ENCODE measurements at regions of chr2 and their contacts with region 1.

Region 1: DNA sequence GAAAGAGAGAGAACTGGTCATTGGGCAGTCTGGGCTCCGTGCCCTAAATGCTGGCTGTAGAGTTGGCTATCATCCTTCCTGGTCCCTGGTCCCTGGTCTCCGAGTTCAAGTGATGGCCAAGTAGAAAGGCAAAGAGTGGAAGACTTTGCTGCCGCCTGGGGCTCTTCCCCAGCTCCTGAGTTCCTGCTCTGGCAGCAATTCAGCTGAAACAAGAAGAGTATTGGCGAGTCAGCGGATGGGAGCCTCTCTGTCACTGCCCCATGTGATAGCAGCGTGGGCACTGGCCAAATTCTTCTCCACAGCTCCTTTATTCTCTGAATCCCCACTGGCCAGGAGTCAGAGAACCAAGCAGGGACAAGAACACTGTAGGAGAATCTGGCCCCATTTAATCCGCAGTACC is 351.0 kb upstream of the POU3F3 start:
- DNase-seq: peak; percentile 29 to 94 (median 89)
- H3K4me3 ChIP-seq: peak overlapping the region in 54 of 59 donors; percentile 3 to 62 (median 40)
- H3K27ac ChIP-seq: peak overlapping the region; percentile 33 to 96 (median 89)
- H3K27me3 ChIP-seq: no peaks in the 10 kb centered on the region
- CTCF ChIP-seq: peak in 43 of 56 donors; percentile 2 to 66 (median 37)

Region 2: GRCh38 chr2:104412384-104412783 is 90.5 kb before region 1 on chr2:
- intact Hi-C with region 1: loop called in 1 of 2 experiments (anchors 5 kb)
- DNase-seq: peak in 9 of 10 donors; percentile 11 to 81 (median 54)
- H3K4me3 ChIP-seq: no peak overlapping the region
- H3K27ac ChIP-seq: peak overlapping the region in 3 of 59 donors; percentile 6 to 53 (median 37)
- H3K27me3 ChIP-seq: no peaks in the 10 kb centered on the region
- CTCF ChIP-seq: peak; percentile 42 to 83 (median 73)

Region 3: GRCh38 chr2:104447831-104448434 is 55.0 kb before region 1 on chr2:
- intact Hi-C with region 1: loop called (anchors 2 kb)
- DNase-seq: no peak
- H3K4me3 ChIP-seq: peak overlapping the region; percentile 7 to 69 (median 50)
- H3K27ac ChIP-seq: peak overlapping the region; percentile 39 to 98 (median 90)
- H3K27me3 ChIP-seq: no peaks in the 10 kb centered on the region
- CTCF ChIP-seq: peak; percentile 21 to 75 (median 59)

Region 4: GRCh38 chr2:104476563-104476988 is 26.3 kb before region 1 on chr2:
- intact Hi-C with region 1: loop called in 1 of 2 experiments (anchors 2 kb)
- DNase-seq: no peak
- H3K4me3 ChIP-seq: peak overlapping the region; percentile 8 to 67 (median 45)
- H3K27ac ChIP-seq: peak overlapping the region in 58 of 59 donors; percentile 6 to 96 (median 84)
- H3K27me3 ChIP-seq: no peaks in the 10 kb centered on the region
- CTCF ChIP-seq: no peak

Region 5: GRCh38 chr2:104616856-104617255 is 114.0 kb after region 1 on chr2:
- intact Hi-C with region 1: no loop called
- DNase-seq: peak in 1 of 10 donors; percentile 6
- H3K4me3 ChIP-seq: peak overlapping the region in 1 of 59 donors; percentile 10
- H3K27ac ChIP-seq: peak overlapping the region in 31 of 59 donors; percentile 8 to 76 (median 42)
- H3K27me3 ChIP-seq: no peaks in the 10 kb centered on the region
- CTCF ChIP-seq: no peak

Region 6: GRCh38 chr2:104849618-104850141 is 346.8 kb after region 1 on chr2:
- intact Hi-C with region 1: loop called (anchors 5 kb)
- DNase-seq: peak; percentile 63 to 89 (median 80)
- H3K4me3 ChIP-seq: peak overlapping the region; percentile 26 to 93 (median 80)
- H3K27ac ChIP-seq: peak overlapping the region; percentile 75 to 100 (median 99)
- H3K27me3 ChIP-seq: peaks cover 0 to 12% (median 0%) of the 10 kb centered on the region in 45 donors
- CTCF ChIP-seq: peak; percentile 73 to 95 (median 88)